ENCODE measurements at regions of chr7 and their contacts with region 1.

Region 1: GRCh38 chr7:32957326-32958045 is at the start of gene FKBP9:
- DNase-seq: peak; percentile 89
- H3K4me3 Mint-ChIP-seq: peak within 1 kb of the TSS; percentile 80
- H3K27ac Mint-ChIP-seq: peak within 1 kb of the TSS; percentile 54
- H3K4me1 Mint-ChIP-seq: peaks cover 9% of the 10 kb centered on the region
- H3K27me3 Mint-ChIP-seq: no peaks in the 10 kb centered on the region
- CTCF ChIP-seq: no peak
- total RNA-seq, gene FKBP9: 111 and 139 TPM in 2 replicates

Region 2: DNA sequence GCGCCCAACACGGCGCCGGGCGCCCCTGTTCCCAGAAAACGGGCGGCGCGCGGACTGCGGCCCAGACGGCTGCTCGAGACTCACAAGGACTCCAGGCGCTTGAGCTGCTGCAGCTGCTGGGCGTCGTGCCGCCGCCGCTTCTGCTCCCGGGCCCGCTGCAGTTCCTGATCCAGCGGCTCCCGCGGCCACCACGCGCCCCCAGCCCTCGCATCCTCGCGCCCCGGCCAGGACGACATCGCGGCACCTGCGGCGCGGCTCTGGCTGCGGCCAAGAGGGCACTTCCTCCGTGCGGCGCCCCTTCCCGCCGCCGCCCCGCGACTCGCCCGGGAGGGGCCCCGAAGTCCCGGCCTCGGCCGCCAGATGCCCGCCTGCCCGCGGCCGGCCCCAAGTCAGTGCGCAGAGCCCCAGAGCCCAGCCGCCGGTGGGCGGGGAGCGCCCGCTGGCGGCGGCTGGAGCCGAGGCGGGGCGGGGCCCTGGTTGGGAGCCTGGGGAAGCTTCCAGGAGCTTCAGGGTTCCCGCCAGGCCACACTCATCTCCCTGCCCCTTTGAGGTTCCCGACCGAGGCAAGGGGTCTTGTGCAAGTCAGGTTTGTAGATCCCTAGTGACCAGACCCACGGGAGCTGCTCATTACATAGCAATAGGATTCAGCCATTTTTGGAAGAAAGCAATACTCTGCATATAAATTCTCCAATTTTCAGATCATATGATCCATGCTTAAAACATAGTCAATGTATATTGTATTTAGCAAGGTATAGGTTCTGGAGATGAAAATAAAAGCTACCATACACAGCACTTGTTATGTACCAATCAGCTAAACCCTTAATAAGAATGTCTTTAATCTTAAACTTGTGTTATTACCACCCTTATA is 14.5 kb before region 1 on chr7:
- CTCF ChIA-PET with region 1: interaction called, 26 read pairs
- POLR2A ChIA-PET with region 1: interaction called, 83 read pairs
- intact Hi-C with region 1: no loop called
- DNase-seq: peak; percentile 80
- H3K4me3 Mint-ChIP-seq: peak overlapping the region; percentile 85
- H3K27ac Mint-ChIP-seq: peak overlapping the region; percentile 83
- H3K4me1 Mint-ChIP-seq: peaks cover 22% of the 10 kb centered on the region
- H3K27me3 Mint-ChIP-seq: no peaks in the 10 kb centered on the region
- CTCF ChIP-seq: peak; percentile 28

Region 3: DNA sequence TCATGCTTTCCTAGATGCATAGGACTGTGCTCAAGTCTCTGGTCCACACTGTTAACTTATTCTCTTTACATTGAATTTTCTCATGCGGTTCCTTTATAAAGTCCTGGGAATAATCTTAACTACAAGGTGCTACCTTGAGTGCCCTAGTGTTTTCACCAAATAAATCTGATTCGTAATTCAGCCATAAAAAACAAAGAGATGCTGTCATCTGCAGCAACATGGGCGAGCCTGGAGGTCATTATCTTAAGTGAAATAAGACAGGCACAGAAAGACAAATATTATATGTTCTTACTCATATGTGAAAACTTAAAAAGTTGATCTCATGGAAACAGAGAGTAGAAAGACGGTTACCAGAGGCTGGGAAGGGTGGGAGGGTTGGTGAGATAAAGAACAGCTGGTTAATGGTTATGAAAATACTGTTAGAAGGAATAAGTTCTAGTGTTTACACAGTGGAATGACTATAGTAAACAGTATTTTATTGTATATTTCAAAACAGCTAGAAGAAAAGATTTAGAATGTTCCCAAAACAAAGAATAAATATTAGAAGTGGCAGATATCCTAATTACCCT is 66.8 kb after region 1 on chr7:
- CTCF ChIA-PET with region 1: interaction called, 3 read pairs
- POLR2A ChIA-PET with region 1: interaction called, 12 read pairs
- intact Hi-C with region 1: no loop called
- DNase-seq: no peak
- H3K4me3 Mint-ChIP-seq: no peak overlapping the region
- H3K27ac Mint-ChIP-seq: no peak overlapping the region
- H3K4me1 Mint-ChIP-seq: no peaks in the 10 kb centered on the region
- H3K27me3 Mint-ChIP-seq: no peaks in the 10 kb centered on the region
- CTCF ChIP-seq: no peak

Region 4: GRCh38 chr7:33040803-33041516 is 83.5 kb after region 1 on chr7:
- CTCF ChIA-PET with region 1: interaction called, 3 read pairs
- POLR2A ChIA-PET with region 1: interaction called, 43 read pairs
- intact Hi-C with region 1: loop called (anchors 5 kb)
- DNase-seq: peak; percentile 86
- H3K4me3 Mint-ChIP-seq: peak overlapping the region; percentile 65
- H3K27ac Mint-ChIP-seq: peak overlapping the region; percentile 76
- H3K4me1 Mint-ChIP-seq: peaks cover 18% of the 10 kb centered on the region
- H3K27me3 Mint-ChIP-seq: no peaks in the 10 kb centered on the region
- CTCF ChIP-seq: no peak

Region 5: GRCh38 chr7:33050535-33051318 is 93.2 kb after region 1 on chr7:
- CTCF ChIA-PET with region 1: interaction called, 8 read pairs
- POLR2A ChIA-PET with region 1: interaction called, 11 read pairs
- intact Hi-C with region 1: no loop called
- DNase-seq: peak; percentile 60
- H3K4me3 Mint-ChIP-seq: no peak overlapping the region
- H3K27ac Mint-ChIP-seq: no peak overlapping the region
- H3K4me1 Mint-ChIP-seq: peaks cover 7% of the 10 kb centered on the region
- H3K27me3 Mint-ChIP-seq: no peaks in the 10 kb centered on the region
- CTCF ChIP-seq: peak; percentile 58

Region 6: GRCh38 chr7:33062782-33063443 is 105.4 kb after region 1 on chr7:
- CTCF ChIA-PET with region 1: no interaction called
- POLR2A ChIA-PET with region 1: interaction called, 45 read pairs
- intact Hi-C with region 1: no loop called
- DNase-seq: peak; percentile 92
- H3K4me3 Mint-ChIP-seq: peak overlapping the region; percentile 97
- H3K27ac Mint-ChIP-seq: peak overlapping the region; percentile 90
- H3K4me1 Mint-ChIP-seq: peaks cover 22% of the 10 kb centered on the region
- H3K27me3 Mint-ChIP-seq: no peaks in the 10 kb centered on the region
- CTCF ChIP-seq: no peak

Region 7: GRCh38 chr7:33195264-33195663 is 237.8 kb after region 1 on chr7:
- CTCF ChIA-PET with region 1: no interaction called
- POLR2A ChIA-PET with region 1: no interaction called
- intact Hi-C with region 1: no loop called
- DNase-seq: peak; percentile 62
- H3K4me3 Mint-ChIP-seq: no peak overlapping the region
- H3K27ac Mint-ChIP-seq: no peak overlapping the region
- H3K4me1 Mint-ChIP-seq: peaks cover 5% of the 10 kb centered on the region
- H3K27me3 Mint-ChIP-seq: no peaks in the 10 kb centered on the region
- CTCF ChIP-seq: no peak

Measured in MCF 10A (cell line).